AG04449 (cell line): ENCODE measurements at regions of chr5 and their contacts with region 1.

Region 1: GRCh38 chr5:108681079-108681921 is 66.4 kb upstream of the FER start:
- DNase-seq: peak; percentile 37
- H3K4me3 ChIP-seq: no peak overlapping the region
- CTCF ChIP-seq: peak; percentile 73

Region 2: DNA sequence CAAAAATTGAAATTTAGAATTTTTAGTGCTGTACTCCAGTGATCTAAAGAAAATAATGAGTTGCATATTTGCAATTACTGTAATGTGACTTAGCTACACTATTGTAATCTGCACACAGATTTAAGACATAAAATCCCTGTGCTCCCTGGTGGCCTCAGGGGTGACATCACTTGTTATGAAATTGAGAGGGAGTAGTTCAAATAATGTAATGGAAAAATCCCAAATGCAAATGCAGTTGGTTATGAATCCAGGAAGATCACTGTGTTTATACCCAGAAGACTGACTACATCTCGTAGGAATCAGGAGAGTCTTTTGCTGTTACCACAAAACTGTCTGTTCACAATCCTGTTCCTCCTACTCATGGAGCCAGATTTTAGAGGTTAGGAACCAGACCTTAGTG is 120.7 kb before region 1 on chr5:
- CTCF ChIA-PET with region 1: no interaction called
- POLR2A ChIA-PET with region 1: no interaction called
- DNase-seq: peak; percentile 98
- H3K4me3 ChIP-seq: no peak overlapping the region
- CTCF ChIP-seq: no peak

Region 3: GRCh38 chr5:108670591-108671289 is 10.6 kb before region 1 on chr5:
- CTCF ChIA-PET with region 1: interaction called, 12 read pairs
- POLR2A ChIA-PET with region 1: no interaction called
- DNase-seq: no peak
- H3K4me3 ChIP-seq: no peak overlapping the region
- CTCF ChIP-seq: no peak

Region 4: GRCh38 chr5:109468737-109469420 is 787.6 kb after region 1 on chr5:
- CTCF ChIA-PET with region 1: interaction called, 14 read pairs
- POLR2A ChIA-PET with region 1: no interaction called
- DNase-seq: peak; percentile 67
- H3K4me3 ChIP-seq: no peak overlapping the region
- CTCF ChIP-seq: peak; percentile 77